Activated CD4-positive, alpha-beta memory T cell treated with anti-CD3 and anti-CD28 coated beads for 36 hours (primary cell): ENCODE measurements at regions of chr19 and their contacts with region 1.

Region 1: GRCh38 chr19:33241530-33242101 is 16.0 kb upstream of the SLC7A10 start:
- DNase-seq: peak; percentile 54
- H3K4me3 Mint-ChIP-seq: no peak overlapping the region
- H3K27ac Mint-ChIP-seq: no peak overlapping the region
- H3K4me1 Mint-ChIP-seq: no peaks in the 10 kb centered on the region
- H3K27me3 Mint-ChIP-seq: peaks cover 1% of the 10 kb centered on the region

Region 2: DNA sequence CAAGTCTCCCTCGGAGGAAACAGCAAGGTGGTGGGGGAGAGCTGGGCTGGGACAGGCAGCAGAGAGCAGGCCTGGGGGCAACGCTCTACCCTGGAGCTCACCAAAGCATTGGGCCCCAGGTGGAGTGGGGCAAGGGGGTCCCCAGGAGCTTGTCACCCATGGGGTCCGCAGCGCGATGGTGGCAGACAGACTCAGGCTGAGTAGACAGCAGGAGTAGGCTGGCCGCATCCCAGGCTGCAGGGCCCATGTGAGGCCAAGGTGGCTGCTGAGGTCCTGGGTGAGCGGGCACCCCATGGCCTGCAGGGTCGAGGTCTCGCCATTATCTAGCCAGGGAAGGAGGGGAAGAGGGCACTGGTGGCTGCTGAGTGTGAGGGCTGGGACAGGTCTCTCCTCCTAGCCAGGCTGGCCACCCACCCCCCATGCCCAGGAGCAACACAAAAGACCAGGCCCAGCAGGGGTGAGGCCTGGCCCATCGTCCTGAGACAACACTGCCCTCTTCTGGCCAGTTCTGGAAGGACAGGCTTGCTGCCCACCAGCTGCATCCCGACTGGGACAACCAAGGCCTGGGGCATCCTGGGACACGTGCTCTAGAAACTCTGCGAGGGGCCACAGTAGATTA is 165.0 kb after region 1 on chr19:
- CTCF ChIA-PET with region 1: interaction called, 56 read pairs
- POLR2A ChIA-PET with region 1: no interaction called
- intact Hi-C with region 1: no loop called
- DNase-seq: peak; percentile 84
- H3K4me3 Mint-ChIP-seq: no peak overlapping the region
- H3K27ac Mint-ChIP-seq: no peak overlapping the region
- H3K4me1 Mint-ChIP-seq: peaks cover 4% of the 10 kb centered on the region
- H3K27me3 Mint-ChIP-seq: no peaks in the 10 kb centered on the region